ENCODE measurements at regions of chr2 and their contacts with region 1.

Region 1: DNA sequence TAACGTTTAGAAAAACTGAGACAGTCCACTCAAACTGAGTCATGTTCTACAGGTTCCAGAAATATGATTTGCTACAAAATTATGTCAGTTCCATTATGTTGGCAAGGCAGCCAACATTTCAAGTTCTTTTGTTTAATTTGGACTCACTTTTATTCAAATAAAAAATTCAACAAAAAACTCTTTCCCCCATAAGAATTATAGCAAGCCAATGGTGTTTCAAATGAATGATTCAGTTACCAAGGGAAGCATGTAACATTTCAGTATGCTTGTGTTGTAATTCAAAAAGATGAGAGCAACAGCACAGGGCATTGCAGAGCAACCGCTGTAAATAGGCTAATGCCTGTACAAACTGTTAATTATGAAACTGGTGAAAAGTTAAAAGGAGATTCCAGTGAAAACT is 140.8 kb downstream of the FIGN start:
- DNase-seq: no peak
- ATAC-seq: no peak
- H3K4me3 Mint-ChIP-seq: no peak overlapping the region
- H3K27ac Mint-ChIP-seq: no peak overlapping the region
- H3K4me1 Mint-ChIP-seq: peaks cover 53% of the 10 kb centered on the region
- H3K27me3 Mint-ChIP-seq: no peaks in the 10 kb centered on the region
- CTCF ChIP-seq: no peak

Region 2: DNA sequence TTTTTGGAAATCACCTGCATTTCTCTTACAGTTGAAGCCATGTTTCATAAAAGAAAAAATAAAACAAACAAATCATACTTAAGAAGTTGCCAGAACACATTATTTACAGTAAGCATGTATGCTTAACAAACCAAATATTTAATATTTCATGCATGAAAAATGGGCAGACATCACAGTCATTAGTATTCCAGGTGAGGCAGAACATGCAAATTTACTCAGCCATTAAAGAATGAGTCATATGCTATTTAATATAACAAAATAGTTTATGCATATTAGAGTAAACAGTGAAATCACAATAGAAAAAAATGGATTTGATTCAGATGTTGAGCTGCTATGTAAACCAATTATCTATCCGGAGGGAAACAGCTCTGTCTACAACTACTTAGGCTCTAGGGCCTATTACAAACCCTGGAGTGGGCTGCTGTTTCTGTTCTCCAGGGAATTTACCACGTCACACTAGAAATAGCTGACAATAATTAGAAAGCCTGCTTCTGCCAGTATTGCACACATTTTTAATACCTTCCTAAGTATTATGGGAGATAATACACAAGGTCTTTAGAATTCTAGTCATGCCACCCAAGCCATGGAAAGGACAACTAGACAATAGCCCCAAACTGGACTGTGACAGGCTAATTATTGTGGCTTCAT is 270.5 kb before region 1 on chr2:
- CTCF ChIA-PET with region 1: no interaction called
- POLR2A ChIA-PET with region 1: no interaction called
- DNase-seq: no peak
- ATAC-seq: no peak
- H3K4me3 Mint-ChIP-seq: no peak overlapping the region
- H3K27ac Mint-ChIP-seq: no peak overlapping the region
- H3K4me1 Mint-ChIP-seq: no peaks in the 10 kb centered on the region
- H3K27me3 Mint-ChIP-seq: no peaks in the 10 kb centered on the region
- CTCF ChIP-seq: no peak

Region 3: DNA sequence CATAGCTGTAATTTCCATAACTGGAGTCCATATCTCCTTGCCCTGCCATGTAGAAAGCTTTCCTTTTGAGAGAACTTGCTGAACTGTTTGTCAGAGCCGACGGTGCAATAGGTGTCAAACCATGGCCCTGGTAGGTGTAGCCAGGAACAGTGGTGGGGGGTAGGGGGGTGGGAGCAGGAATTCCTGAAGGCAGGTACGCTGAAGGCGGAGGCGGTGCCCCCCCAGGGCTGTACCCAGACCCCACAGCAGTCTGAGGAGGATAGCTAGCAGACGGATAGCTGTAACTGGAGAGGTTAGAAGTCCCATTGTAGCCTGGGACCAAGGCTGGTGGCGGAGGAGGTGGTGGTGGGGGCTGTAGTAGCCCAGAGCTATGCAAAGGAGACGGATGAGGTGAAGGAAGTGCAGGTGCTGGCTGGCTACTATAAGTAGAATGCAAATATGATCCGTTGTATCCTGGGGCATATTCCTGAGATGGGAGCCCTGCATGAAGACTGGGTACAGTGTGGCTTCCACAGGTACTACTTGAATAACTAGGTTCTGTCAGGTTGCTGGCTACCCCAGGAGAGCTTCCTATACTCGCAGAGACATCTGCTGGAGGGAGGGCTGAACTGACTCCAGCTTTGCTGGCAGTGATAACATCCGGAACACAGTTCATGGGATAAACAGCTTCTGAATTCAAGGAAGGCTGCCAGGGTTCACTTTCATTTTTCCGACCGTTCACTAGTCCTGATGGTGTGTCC is 16.0 kb after region 1 on chr2:
- CTCF ChIA-PET with region 1: interaction called, 14 read pairs
- POLR2A ChIA-PET with region 1: no interaction called
- DNase-seq: peak; percentile 53
- ATAC-seq: peak; percentile 92
- H3K4me3 Mint-ChIP-seq: no peak overlapping the region
- H3K27ac Mint-ChIP-seq: peak overlapping the region; percentile 41; the same call in 1 of the 2 replicates
- H3K4me1 Mint-ChIP-seq: peaks cover 18% of the 10 kb centered on the region
- H3K27me3 Mint-ChIP-seq: no peaks in the 10 kb centered on the region
- CTCF ChIP-seq: no peak

Region 4: DNA sequence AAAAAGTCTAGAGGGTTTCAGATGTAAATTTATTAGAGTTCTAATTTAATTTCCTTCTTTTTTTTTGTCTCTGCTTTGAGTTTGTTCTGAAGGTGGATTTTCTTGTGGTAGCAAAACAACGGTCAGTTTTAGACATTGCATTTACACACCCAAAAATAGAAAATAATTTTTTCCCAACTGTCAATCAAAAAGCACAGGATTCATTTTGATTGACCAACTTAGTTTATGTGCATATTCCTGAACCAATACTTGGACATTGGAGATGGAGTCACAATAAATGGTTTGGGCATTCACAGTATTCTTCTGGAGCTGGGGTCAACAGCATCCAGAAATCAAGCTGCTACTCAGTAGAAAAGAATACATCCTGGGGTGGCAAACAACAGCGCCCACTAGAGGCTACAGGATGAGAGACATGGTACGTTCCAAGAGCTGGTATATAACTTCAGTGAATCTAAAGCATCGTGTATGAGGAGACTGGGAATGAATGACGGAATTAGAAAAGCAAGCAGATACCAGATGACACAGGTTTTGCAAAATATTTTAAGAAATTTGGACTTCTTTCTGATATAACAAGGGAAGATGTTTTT is 283.6 kb after region 1 on chr2:
- CTCF ChIA-PET with region 1: interaction called, 12 read pairs
- POLR2A ChIA-PET with region 1: no interaction called
- DNase-seq: peak; percentile 70
- ATAC-seq: peak; percentile 94
- H3K4me3 Mint-ChIP-seq: no peak overlapping the region
- H3K27ac Mint-ChIP-seq: no peak overlapping the region
- H3K4me1 Mint-ChIP-seq: peaks cover 6% of the 10 kb centered on the region
- H3K27me3 Mint-ChIP-seq: no peaks in the 10 kb centered on the region
- CTCF ChIP-seq: peak; percentile 84